ENCODE measurements at regions of chr14 and their contacts with region 1.

Region 1: DNA sequence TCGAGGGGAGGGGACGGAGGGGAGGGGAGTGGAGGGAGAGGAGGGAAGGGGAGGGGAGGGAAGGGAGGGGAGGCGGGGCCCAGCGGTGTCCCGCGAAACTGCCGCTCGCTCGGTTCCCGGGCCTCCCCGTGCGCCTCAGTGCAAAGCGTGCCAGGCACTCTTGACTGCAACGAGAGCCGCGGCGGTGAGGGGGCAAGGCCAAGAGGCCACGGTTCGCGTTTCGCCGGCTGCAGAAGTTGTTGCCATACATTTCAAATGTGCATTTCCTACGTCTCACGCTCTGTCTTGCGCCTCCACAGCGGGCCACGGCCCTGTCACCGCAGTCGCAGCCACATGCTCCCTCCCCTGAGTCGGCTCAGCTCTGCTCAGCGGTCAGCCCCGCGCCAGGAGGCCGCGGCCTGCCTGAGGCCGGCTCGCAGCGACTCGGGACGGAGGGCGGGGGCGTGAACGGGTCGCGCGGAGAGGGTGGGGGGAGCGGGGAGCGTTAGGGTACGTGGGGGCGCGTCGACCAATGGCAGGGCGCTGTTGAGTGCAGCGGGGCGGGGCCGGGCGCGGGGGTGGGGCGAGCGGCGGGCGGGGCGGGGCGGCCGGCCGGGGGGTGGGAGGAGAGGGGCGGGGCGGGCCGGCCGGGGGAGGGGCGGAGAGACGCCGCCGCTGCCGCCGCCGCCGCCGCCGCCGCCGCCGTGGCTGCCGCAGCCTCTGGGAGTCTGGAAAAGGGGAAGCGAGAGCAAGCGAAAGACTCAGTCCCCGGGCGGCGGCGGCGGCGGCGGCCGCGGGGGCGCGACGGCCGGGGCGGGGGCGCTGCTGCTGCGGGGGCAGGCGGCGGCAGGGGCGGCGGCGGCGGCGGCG is at the start of gene PPP2R5C:
- DNase-seq: peak; percentile 55 to 94
- H3K4me3 ChIP-seq: peak within 1 kb of the TSS; percentile 86 to 94
- H3K27ac ChIP-seq: peak within 1 kb of the TSS; percentile 84 to 85
- H3K4me1 ChIP-seq: peaks cover 0 to 5% of the 10 kb centered on the region in 2 donors
- H3K27me3 ChIP-seq: no peaks in the 10 kb centered on the region
- CTCF ChIP-seq: no peak
- total RNA-seq, gene PPP2R5C: 45.6 TPM

Region 2: GRCh38 chr14:100239840-100240724 is 1521.2 kb before region 1 on chr14:
- intact Hi-C with region 1: loop called (anchors 2 kb)
- DNase-seq: peak; percentile 65 to 94
- H3K4me3 ChIP-seq: peak overlapping the region; percentile 83 to 100
- H3K27ac ChIP-seq: peak overlapping the region; percentile 91 to 93
- H3K4me1 ChIP-seq: peaks cover 9 to 32% of the 10 kb centered on the region in 2 donors
- H3K27me3 ChIP-seq: no peaks in the 10 kb centered on the region
- CTCF ChIP-seq: peak; percentile 51 to 79 (median 65)

Region 3: DNA sequence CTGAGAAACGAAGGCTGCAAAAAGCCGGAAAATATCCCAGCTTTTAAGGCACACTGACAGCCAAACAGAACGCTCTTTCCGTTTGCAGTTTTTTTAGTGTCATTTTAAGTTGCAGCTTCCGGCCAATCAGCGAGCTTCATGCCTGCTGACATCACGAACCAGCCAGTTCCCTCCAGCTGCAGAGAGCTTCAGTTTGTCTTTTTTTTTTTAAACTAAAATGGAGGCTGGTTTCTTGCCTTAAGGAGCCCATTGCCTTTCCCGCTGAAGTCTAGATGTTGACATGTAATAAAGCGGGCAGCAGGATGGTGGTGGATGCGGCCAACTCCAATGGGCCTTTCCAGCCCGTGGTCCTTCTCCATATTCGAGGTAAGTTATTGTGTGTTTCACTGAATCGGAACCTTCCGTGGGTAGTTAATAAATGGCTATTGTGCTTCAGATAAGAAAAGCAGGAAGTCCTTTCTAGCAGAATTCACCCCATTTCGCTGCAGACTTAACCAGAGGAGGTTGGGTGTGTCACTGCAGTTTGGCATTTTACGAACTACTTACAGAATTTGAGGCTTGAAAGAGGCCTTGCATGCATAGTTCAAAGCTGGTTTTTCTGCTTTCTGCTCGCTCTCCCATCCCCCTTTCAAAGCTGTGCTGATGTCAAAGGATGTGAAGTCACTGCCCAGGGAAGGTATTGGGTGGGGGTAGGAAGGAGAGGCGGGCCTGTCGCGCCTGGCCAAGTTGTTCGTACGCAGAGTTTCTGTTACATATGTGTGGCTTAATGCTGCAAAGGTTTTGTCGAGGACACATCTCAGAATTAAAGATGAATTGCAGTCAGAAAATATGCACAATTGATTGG is 48.6 kb after region 1 on chr14:
- intact Hi-C with region 1: loop called (anchors 1 kb)
- DNase-seq: peak; percentile 72 to 94
- H3K4me3 ChIP-seq: peak overlapping the region; percentile 73 to 90
- H3K27ac ChIP-seq: peak overlapping the region; percentile 97 to 98
- H3K4me1 ChIP-seq: peaks cover 6 to 27% of the 10 kb centered on the region in 2 donors
- H3K27me3 ChIP-seq: no peaks in the 10 kb centered on the region
- CTCF ChIP-seq: no peak

Region 4: GRCh38 chr14:101964297-101965144 is 203.3 kb after region 1 on chr14 and contains the start of gene DYNC1H1:
- intact Hi-C with region 1: loop called (anchors 5 kb)
- DNase-seq: peak; percentile 77 to 96
- H3K4me3 ChIP-seq: peak within 1 kb of the TSS; percentile 100
- H3K27ac ChIP-seq: peak within 1 kb of the TSS; percentile 93 to 95
- H3K4me1 ChIP-seq: peaks cover 2 to 6% of the 10 kb centered on the region in 2 donors
- H3K27me3 ChIP-seq: no peaks in the 10 kb centered on the region
- CTCF ChIP-seq: no peak
- total RNA-seq, gene DYNC1H1: 577 TPM

Region 5: DNA sequence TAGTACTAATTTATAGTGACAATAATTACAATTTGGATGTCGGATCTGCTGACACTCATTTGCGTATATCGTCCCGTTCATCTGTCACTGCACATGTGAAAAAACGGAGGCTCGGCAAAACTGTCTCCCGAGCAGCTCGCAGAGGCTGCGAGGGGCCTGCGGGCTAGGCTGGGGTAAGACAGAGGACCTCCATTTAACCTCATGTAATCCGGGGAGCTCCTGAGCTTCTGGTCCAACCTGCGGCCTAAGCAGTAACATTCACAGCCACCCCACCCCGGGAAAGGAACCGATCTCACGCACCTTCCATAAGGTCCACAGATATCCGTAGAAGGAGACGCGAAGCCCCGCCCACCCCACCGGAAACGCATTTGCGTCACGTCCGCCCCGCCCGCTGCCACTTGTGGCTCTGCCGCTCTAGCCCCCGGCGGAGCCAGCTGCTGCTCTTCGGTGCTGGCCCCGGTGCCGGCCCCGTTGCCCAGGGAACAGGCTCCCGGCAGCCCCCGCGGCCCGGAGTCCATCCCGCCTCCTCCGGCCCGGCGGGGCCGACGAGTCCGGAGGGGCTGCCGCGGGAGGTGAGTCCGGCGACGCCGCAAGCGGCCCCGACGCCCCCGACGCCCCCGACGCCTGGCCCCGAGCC is 601.4 kb after region 1 on chr14 and contains the starts of genes CINP and TECPR2:
- intact Hi-C with region 1: loop called (anchors 2 kb)
- DNase-seq: peak; percentile 90 to 99
- H3K4me3 ChIP-seq: peak within 1 kb of the TSS; percentile 86 to 93
- H3K27ac ChIP-seq: peak within 1 kb of the TSS; percentile 91 to 95
- H3K4me1 ChIP-seq: peaks cover 0 to 16% of the 10 kb centered on the region in 2 donors
- H3K27me3 ChIP-seq: no peaks in the 10 kb centered on the region
- CTCF ChIP-seq: no peak
- total RNA-seq, gene CINP: 6.8 TPM
- total RNA-seq, gene TECPR2: 27.0 TPM

Region 6: GRCh38 chr14:102591889-102592763 is 830.9 kb after region 1 on chr14 and contains the start of gene RCOR1:
- intact Hi-C with region 1: loop called (anchors 5 kb)
- DNase-seq: peak; percentile 93 to 99
- H3K4me3 ChIP-seq: peak within 1 kb of the TSS; percentile 68 to 83
- H3K27ac ChIP-seq: peak within 1 kb of the TSS; percentile 94 to 98
- H3K4me1 ChIP-seq: peaks cover 8 to 12% of the 10 kb centered on the region in 2 donors
- H3K27me3 ChIP-seq: no peaks in the 10 kb centered on the region
- CTCF ChIP-seq: no peak
- total RNA-seq, gene RCOR1: 4.7 TPM

Measured in ascending aorta (tissue), 2 donors.